ENCODE measurements at regions of chr12 and their contacts with region 1.

Region 1: GRCh38 chr12:88562846-88563582 is 17.3 kb downstream of the KITLG start:
- DNase-seq: no peak
- H3K4me3 ChIP-seq: no peak overlapping the region
- H3K27ac ChIP-seq: no peak overlapping the region
- H3K27me3 ChIP-seq: no peaks in the 10 kb centered on the region
- CTCF ChIP-seq: no peak

Region 2: GRCh38 chr12:88052686-88053085 is 510.3 kb before region 1 on chr12:
- CTCF ChIA-PET with region 1: no interaction called
- POLR2A ChIA-PET with region 1: no interaction called
- DNase-seq: peak; percentile 10
- H3K4me3 ChIP-seq: no peak overlapping the region
- H3K27ac ChIP-seq: no peak overlapping the region
- H3K27me3 ChIP-seq: no peaks in the 10 kb centered on the region
- CTCF ChIP-seq: peak; percentile 62

Region 3: DNA sequence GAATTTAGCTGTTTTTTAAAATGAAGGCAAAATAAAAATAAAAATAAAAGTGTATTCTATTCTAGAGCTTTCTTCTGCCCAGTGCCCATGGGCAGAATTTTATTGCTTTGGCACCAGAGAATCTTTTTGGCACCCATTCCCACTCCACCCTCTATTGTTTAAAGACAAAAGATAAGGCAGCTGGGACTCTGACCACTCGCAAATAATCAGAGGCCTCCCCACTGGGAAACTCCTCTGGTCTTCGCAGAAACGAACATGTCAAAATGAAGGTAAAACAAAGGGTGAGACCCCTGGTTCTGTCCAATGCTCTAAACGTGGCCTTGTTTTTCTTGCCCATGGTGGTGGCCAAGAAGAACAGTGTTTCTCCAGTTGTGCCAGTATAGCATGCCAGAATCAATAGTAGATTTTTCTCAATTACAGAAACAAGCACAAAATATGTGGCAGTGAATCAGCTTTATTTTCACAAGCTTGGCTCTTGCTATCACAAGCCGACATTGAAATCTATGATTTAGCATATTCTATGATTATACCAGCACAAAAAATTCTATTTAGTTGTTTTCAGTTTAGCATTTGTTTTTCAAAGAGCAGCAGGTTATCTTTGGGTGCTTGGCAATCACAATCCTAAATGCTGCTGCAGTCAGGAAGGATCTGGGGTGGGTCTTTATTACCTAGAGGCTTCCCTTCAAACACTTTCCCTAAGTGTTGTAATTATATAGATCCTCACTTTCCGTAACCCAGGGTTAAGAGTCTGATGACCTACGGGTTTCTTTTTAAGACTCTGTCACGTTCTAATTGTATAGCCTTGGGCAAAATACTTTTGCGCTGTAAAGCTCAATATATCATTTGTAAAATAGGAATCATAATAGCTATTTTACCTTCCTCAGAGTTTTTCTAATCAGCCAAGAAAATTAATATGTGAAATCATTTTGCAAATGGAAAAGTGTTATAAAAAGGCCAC is 33.2 kb before region 1 on chr12:
- CTCF ChIA-PET with region 1: no interaction called
- POLR2A ChIA-PET with region 1: no interaction called
- DNase-seq: no peak
- H3K4me3 ChIP-seq: no peak overlapping the region
- H3K27ac ChIP-seq: no peak overlapping the region
- H3K27me3 ChIP-seq: no peaks in the 10 kb centered on the region
- CTCF ChIP-seq: no peak

Region 4: DNA sequence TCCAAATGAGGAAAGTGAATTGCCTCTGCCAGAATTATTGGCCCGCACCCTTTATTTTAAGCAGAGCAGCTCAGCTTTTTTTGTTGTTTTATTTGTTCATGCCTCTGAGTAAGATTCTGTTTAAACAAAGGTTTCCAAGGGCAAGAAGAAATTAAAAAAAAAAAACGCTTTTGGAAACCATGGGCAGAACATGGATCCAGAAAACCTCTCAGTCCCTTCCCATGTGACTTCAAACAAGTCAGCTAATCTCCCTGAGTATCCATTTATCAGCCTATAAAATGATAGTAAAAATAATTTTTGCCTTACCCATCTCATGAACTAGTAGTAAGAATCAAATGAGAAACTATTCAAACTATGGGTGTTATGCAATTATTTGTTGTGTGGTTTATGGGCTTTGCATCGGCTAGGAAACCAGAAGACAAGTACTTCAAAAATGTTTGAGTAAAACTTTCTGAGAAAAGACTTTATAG is 10.4 kb before region 1 on chr12:
- CTCF ChIA-PET with region 1: no interaction called
- POLR2A ChIA-PET with region 1: no interaction called
- DNase-seq: no peak
- H3K4me3 ChIP-seq: no peak overlapping the region
- H3K27ac ChIP-seq: no peak overlapping the region
- H3K27me3 ChIP-seq: no peaks in the 10 kb centered on the region
- CTCF ChIP-seq: no peak

Region 5: DNA sequence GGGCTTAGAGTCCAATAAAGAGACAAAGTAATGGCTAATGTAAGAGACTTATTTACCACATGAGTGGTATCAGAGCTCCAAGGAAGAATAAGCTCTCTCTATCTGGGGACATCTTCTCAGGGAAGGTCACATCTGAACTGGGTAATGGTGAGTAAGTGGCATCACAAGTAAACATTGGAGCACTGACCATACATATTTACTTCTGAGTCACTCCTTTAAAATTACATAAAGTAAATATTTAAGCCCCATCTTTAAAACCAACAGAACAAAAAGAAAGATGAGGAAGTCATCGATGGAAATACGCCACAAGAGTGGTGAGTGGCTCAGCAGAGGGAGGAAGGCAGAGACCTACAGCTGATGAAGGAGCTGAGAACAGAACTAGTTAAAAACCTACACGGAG is 629.4 kb after region 1 on chr12:
- CTCF ChIA-PET with region 1: interaction called, 10 read pairs
- POLR2A ChIA-PET with region 1: no interaction called
- DNase-seq: peak; percentile 18
- H3K4me3 ChIP-seq: no peak overlapping the region
- H3K27ac ChIP-seq: peak overlapping the region; percentile 40
- H3K27me3 ChIP-seq: no peaks in the 10 kb centered on the region
- CTCF ChIP-seq: no peak